HepG2 (cell line): ENCODE measurements at regions of chr3 and their contacts with region 1.

Region 1: DNA sequence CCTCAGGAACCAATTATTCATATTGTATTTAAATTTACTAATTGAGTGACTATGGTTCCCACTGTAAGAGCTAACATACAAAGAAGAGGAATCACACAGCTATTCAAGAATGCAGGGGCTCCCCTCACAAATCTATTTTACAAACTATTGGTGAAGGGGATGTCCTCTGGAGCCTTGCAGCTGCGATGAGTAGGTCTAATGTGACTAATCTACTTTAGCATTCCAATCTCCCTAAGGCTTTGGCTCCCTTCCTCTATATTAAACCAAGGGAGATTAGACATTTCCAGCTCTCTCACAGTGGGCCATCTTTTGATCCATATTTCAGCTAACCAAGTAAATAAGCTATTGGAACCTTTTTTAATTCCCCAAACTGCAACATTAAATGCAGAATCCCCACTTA is 514.2 kb upstream of the BCHE start:
- DNase-seq: no peak
- ATAC-seq: no peak
- H3K4me3 ChIP-seq: no peak overlapping the region
- H3K27ac ChIP-seq: no peak overlapping the region
- H3K4me1 ChIP-seq: no peaks in the 10 kb centered on the region
- H3K27me3 ChIP-seq: no peaks in the 10 kb centered on the region
- CTCF ChIP-seq: no peak
- EP300 ChIP-seq: no peak
- POLR2A ChIP-seq: no peak
- RAD21 ChIP-seq: no peak

Region 2: GRCh38 chr3:165919284-165919683 is 432.2 kb before region 1 on chr3:
- CTCF ChIA-PET with region 1: no interaction called
- POLR2A ChIA-PET with region 1: no interaction called
- in situ Hi-C with region 1: no loop called
- intact Hi-C with region 1: no loop called
- DNase-seq: no peak
- ATAC-seq: no peak
- H3K4me3 ChIP-seq: no peak overlapping the region
- H3K27ac ChIP-seq: no peak overlapping the region
- H3K4me1 ChIP-seq: no peaks in the 10 kb centered on the region
- H3K27me3 ChIP-seq: no peaks in the 10 kb centered on the region
- CTCF ChIP-seq: no peak
- EP300 ChIP-seq: no peak
- POLR2A ChIP-seq: no peak
- RAD21 ChIP-seq: no peak

Region 3: DNA sequence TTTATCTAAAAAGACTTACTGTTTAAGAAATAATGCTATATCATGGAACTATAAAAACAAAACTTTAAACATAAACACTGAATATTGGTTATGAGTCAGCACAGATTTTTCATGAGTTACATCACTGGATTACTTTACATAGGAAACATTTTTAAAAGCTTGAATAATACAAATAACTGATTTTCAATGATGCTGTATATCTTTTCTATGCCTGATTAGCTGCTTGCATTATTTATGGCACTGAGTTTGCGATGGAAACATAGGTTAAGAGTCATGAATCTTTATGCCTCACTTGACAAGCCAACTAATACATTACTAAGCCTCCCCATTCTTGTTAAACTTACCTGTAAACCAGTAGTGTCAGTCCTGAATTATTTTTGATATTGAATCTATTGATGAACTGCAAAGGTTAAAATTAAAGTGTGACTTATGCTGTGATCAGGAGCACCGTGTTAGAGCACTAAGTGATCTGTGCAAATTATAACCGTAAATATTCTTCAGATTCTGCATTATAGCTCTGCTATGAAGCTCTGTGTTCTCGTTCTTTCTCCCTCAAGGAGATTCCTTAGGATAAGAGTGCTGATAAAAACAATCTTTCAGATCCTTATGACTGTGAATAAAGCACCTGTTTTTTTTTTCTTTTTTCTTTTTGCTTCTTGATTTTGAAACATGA is 77.0 kb before region 1 on chr3:
- CTCF ChIA-PET with region 1: no interaction called
- POLR2A ChIA-PET with region 1: no interaction called
- in situ Hi-C with region 1: no loop called
- intact Hi-C with region 1: no loop called
- DNase-seq: no peak
- ATAC-seq: no peak
- H3K4me3 ChIP-seq: no peak overlapping the region
- H3K27ac ChIP-seq: no peak overlapping the region
- H3K4me1 ChIP-seq: no peaks in the 10 kb centered on the region
- H3K27me3 ChIP-seq: no peaks in the 10 kb centered on the region
- CTCF ChIP-seq: no peak
- EP300 ChIP-seq: no peak
- POLR2A ChIP-seq: no peak
- RAD21 ChIP-seq: no peak

Region 4: DNA sequence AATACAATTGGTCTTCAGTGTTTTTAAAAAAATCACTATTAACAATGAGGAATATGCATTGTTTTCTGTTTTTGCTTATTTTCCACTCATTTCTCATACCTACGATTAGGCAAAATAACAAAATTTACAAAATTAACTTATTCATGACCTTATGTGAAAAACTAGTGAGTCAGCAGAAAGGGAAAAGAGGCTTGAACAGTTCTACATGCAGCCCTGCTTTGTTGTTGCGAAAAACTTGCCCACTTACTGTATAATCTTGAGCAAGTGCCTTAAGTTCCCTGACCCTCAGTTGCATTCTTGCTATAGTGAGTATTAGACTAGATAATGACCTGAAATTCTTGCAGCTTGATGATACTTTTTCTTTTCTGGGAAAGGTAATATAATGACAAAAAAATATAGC is 36.9 kb after region 1 on chr3:
- CTCF ChIA-PET with region 1: no interaction called
- POLR2A ChIA-PET with region 1: no interaction called
- in situ Hi-C with region 1: no loop called
- intact Hi-C with region 1: loop called (anchors 1 kb)
- DNase-seq: no peak
- ATAC-seq: no peak
- H3K4me3 ChIP-seq: no peak overlapping the region
- H3K27ac ChIP-seq: no peak overlapping the region
- H3K4me1 ChIP-seq: no peaks in the 10 kb centered on the region
- H3K27me3 ChIP-seq: no peaks in the 10 kb centered on the region
- CTCF ChIP-seq: no peak
- EP300 ChIP-seq: no peak
- POLR2A ChIP-seq: no peak
- RAD21 ChIP-seq: no peak

Region 5: GRCh38 chr3:167941234-167941995 is 1590.0 kb after region 1 on chr3:
- CTCF ChIA-PET with region 1: no interaction called
- POLR2A ChIA-PET with region 1: no interaction called
- in situ Hi-C with region 1: no loop called
- intact Hi-C with region 1: no loop called
- DNase-seq: no peak
- ATAC-seq: no peak
- H3K4me3 ChIP-seq: no peak overlapping the region
- H3K27ac ChIP-seq: no peak overlapping the region
- H3K4me1 ChIP-seq: no peaks in the 10 kb centered on the region
- H3K27me3 ChIP-seq: no peaks in the 10 kb centered on the region
- CTCF ChIP-seq: no peak
- EP300 ChIP-seq: no peak
- POLR2A ChIP-seq: no peak
- RAD21 ChIP-seq: no peak